ENCODE measurements at regions of chr4 and their contacts with region 1.

Region 1: DNA sequence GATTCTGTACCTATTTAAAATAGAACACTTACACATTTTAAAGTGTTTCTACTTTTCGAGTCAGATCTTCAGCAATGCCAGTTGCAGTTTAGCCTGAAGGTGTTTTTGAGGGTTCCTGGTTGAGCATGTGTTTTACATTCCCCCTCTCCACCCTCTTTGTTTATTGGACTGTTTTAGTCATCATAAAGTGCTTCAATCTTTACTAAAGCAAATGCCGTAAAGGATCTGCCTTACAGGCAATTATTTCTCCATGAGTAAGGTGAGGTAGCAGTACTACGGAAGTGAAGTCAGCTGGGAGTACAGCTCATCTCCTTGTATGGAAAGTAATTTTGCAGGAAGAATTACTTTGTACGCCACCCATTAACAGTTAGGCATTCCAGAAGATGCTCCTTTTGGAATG is 36.9 kb downstream of the PDLIM5 start:
- DNase-seq: peak; percentile 91
- H3K4me3 Mint-ChIP-seq: peak overlapping the region; percentile 56
- H3K27ac Mint-ChIP-seq: peak overlapping the region; percentile 88
- H3K4me1 Mint-ChIP-seq: peaks cover 26% of the 10 kb centered on the region
- H3K27me3 Mint-ChIP-seq: no peaks in the 10 kb centered on the region
- CTCF ChIP-seq: no peak

Region 2: GRCh38 chr4:94457692-94458106 is 31.0 kb before region 1 on chr4:
- CTCF ChIA-PET with region 1: interaction called, 4 read pairs
- POLR2A ChIA-PET with region 1: interaction called, 193 read pairs
- intact Hi-C with region 1: loop called (anchors 2 kb)
- DNase-seq: peak; percentile 52
- H3K4me3 Mint-ChIP-seq: peak overlapping the region; percentile 42
- H3K27ac Mint-ChIP-seq: peak overlapping the region; percentile 37
- H3K4me1 Mint-ChIP-seq: peaks cover 52% of the 10 kb centered on the region
- H3K27me3 Mint-ChIP-seq: no peaks in the 10 kb centered on the region
- CTCF ChIP-seq: no peak

Region 3: GRCh38 chr4:94507708-94508107 is 19.0 kb after region 1 on chr4:
- CTCF ChIA-PET with region 1: no interaction called
- POLR2A ChIA-PET with region 1: interaction called, 32 read pairs
- intact Hi-C with region 1: no loop called
- DNase-seq: peak; percentile 95
- H3K4me3 Mint-ChIP-seq: no peak overlapping the region
- H3K27ac Mint-ChIP-seq: peak overlapping the region; percentile 74
- H3K4me1 Mint-ChIP-seq: peaks cover 34% of the 10 kb centered on the region
- H3K27me3 Mint-ChIP-seq: no peaks in the 10 kb centered on the region
- CTCF ChIP-seq: no peak

Region 4: DNA sequence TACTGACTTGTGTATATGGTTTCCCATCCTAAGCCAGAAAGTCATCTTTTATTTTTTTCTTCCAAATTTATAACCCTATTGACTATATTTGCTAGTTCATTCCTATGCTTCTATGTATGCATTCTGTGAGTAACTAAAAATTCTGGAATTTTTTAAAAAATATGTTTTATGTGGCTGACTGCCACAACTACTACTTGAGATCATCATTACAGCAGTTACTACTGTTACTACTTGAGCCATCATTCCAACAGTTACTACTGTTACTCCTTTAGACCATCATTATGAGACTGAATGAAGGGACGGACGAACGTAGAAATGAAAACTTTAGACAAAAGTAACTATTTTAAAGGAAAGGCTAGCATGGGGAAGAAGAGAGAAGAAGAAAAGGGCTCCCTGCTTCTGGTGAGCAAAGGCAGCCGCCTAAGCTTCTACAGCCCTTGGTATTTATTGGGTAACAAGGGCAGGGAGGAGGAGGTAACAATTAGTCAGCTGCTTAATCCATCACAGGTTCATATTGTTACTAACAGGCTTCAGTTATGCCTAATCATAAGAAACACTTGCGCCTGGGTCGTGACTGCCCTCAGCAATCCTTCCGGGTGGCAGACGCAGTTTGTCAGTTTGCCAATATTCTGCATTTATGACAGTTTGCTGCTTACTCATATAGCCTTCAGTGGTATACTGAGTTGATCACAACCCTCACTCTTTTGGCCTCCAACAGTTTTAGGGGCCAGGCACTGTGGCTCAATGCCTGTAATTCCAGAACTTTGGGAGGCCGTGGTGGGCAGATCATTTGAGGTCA is 43.5 kb after region 1 on chr4:
- CTCF ChIA-PET with region 1: no interaction called
- POLR2A ChIA-PET with region 1: interaction called, 7 read pairs
- intact Hi-C with region 1: loop called (anchors 1 kb)
- DNase-seq: peak; percentile 89
- H3K4me3 Mint-ChIP-seq: peak overlapping the region; percentile 32
- H3K27ac Mint-ChIP-seq: peak overlapping the region; percentile 2
- H3K4me1 Mint-ChIP-seq: peaks cover 33% of the 10 kb centered on the region
- H3K27me3 Mint-ChIP-seq: no peaks in the 10 kb centered on the region
- CTCF ChIP-seq: no peak

Measured in MCF 10A (cell line).